ENCODE measurements at regions of chr6 and their contacts with region 1.

Region 1: GRCh38 chr6:13454286-13455221 is 32.8 kb downstream of the GFOD1 start:
- DNase-seq: peak; percentile 31 to 92 (median 70)
- ATAC-seq: peak; percentile 80
- H3K4me3 ChIP-seq: peak overlapping the region; percentile 10 to 26
- H3K4me3 Mint-ChIP-seq: peak overlapping the region; percentile 62
- H3K27ac ChIP-seq: peak overlapping the region; percentile 18 to 77
- H3K27ac Mint-ChIP-seq: peak overlapping the region; percentile 90
- H3K4me1 ChIP-seq: peaks cover 31% of the 10 kb centered on the region
- H3K4me1 Mint-ChIP-seq: peaks cover 36% of the 10 kb centered on the region
- H3K27me3 ChIP-seq: no peaks in the 10 kb centered on the region
- H3K27me3 Mint-ChIP-seq: no peaks in the 10 kb centered on the region
- CTCF ChIP-seq: peak; percentile 25

Region 2: DNA sequence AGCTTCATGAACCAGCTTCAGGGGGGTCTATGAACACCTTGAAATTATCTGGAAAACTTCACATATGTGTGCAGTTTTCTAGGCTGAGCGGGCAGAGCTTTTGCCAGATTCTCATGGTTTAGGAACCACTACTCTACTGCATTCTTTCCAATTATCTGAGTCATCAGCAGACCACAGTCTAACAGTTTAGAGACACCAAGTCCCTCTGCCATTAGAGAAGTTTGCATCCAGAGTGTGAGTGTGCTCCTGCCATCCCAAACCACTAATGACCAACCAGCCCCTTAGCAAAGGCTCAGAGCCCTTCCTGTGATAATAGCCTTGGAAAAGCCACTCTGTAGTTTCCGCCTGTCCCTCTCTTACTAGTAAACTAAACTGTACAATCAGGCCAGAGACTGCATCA is 641.2 kb before region 1 on chr6:
- CTCF ChIA-PET with region 1: no interaction called
- POLR2A ChIA-PET with region 1: no interaction called
- intact Hi-C with region 1: no loop called
- DNase-seq: no peak
- ATAC-seq: no peak
- H3K4me3 ChIP-seq: no peak overlapping the region
- H3K4me3 Mint-ChIP-seq: no peak overlapping the region
- H3K27ac ChIP-seq: no peak overlapping the region
- H3K27ac Mint-ChIP-seq: no peak overlapping the region
- H3K4me1 ChIP-seq: no peaks in the 10 kb centered on the region
- H3K4me1 Mint-ChIP-seq: no peaks in the 10 kb centered on the region
- H3K27me3 ChIP-seq: no peaks in the 10 kb centered on the region
- H3K27me3 Mint-ChIP-seq: peaks cover 4% of the 10 kb centered on the region
- CTCF ChIP-seq: no peak

Region 3: DNA sequence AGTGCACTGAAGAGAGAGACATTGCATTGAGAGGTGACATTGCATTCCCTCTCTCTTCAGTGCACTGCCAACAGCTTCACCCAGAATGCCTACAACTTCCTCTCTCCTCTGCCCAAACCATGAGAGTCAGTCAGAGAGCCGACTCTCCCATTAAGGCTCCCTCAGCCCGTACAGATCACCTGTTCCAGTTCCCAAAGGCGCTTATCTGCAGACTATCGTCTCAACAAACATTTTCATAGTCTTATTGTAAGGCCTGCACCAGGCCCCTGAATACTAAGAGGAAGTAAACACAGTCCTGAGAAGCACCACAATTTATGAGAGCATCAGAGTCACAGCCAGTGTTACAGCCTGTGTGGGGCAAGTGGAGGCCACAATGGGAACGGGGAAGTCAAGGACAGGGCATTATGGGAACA is 20.8 kb before region 1 on chr6:
- CTCF ChIA-PET with region 1: interaction called, 3 read pairs
- POLR2A ChIA-PET with region 1: interaction called, 6 read pairs
- intact Hi-C with region 1: loop called in 1 of 2 experiments (anchors 1 kb)
- DNase-seq: no peak
- ATAC-seq: no peak
- H3K4me3 ChIP-seq: no peak overlapping the region
- H3K4me3 Mint-ChIP-seq: no peak overlapping the region
- H3K27ac ChIP-seq: peak overlapping the region in 1 of 2 experiments; percentile 56
- H3K27ac Mint-ChIP-seq: peak overlapping the region; percentile 68
- H3K4me1 ChIP-seq: peaks cover 30% of the 10 kb centered on the region
- H3K4me1 Mint-ChIP-seq: peaks cover 67% of the 10 kb centered on the region
- H3K27me3 ChIP-seq: no peaks in the 10 kb centered on the region
- H3K27me3 Mint-ChIP-seq: no peaks in the 10 kb centered on the region
- CTCF ChIP-seq: no peak

Region 4: GRCh38 chr6:13526727-13527670 is 72.4 kb after region 1 on chr6:
- CTCF ChIA-PET with region 1: interaction called, 5 read pairs
- POLR2A ChIA-PET with region 1: interaction called, 3 read pairs
- intact Hi-C with region 1: loop called in 1 of 2 experiments (anchors 1 kb)
- DNase-seq: peak in 8 of 9 experiments; percentile 19 to 77 (median 50)
- ATAC-seq: peak; percentile 94
- H3K4me3 ChIP-seq: no peak overlapping the region
- H3K4me3 Mint-ChIP-seq: no peak overlapping the region
- H3K27ac ChIP-seq: no peak overlapping the region
- H3K27ac Mint-ChIP-seq: peak overlapping the region; percentile 25
- H3K4me1 ChIP-seq: peaks cover 16% of the 10 kb centered on the region
- H3K4me1 Mint-ChIP-seq: peaks cover 20% of the 10 kb centered on the region
- H3K27me3 ChIP-seq: no peaks in the 10 kb centered on the region
- H3K27me3 Mint-ChIP-seq: no peaks in the 10 kb centered on the region
- CTCF ChIP-seq: no peak

Region 5: GRCh38 chr6:13538084-13538483 is 83.5 kb after region 1 on chr6:
- CTCF ChIA-PET with region 1: interaction called, 38 read pairs
- POLR2A ChIA-PET with region 1: interaction called, 4 read pairs
- intact Hi-C with region 1: loop called (anchors 1 to 5 kb)
- DNase-seq: peak in 2 of 9 experiments; percentile 52 to 66
- ATAC-seq: peak; percentile 36
- H3K4me3 ChIP-seq: no peak overlapping the region
- H3K4me3 Mint-ChIP-seq: no peak overlapping the region
- H3K27ac ChIP-seq: no peak overlapping the region
- H3K27ac Mint-ChIP-seq: no peak overlapping the region
- H3K4me1 ChIP-seq: no peaks in the 10 kb centered on the region
- H3K4me1 Mint-ChIP-seq: no peaks in the 10 kb centered on the region
- H3K27me3 ChIP-seq: no peaks in the 10 kb centered on the region
- H3K27me3 Mint-ChIP-seq: no peaks in the 10 kb centered on the region
- CTCF ChIP-seq: peak; percentile 44

Region 6: GRCh38 chr6:13767121-13767808 is 312.7 kb after region 1 on chr6:
- CTCF ChIA-PET with region 1: interaction called, 3 read pairs
- POLR2A ChIA-PET with region 1: no interaction called
- intact Hi-C with region 1: loop called in 1 of 2 experiments (anchors 1 kb)
- DNase-seq: peak; percentile 11 to 77 (median 53)
- ATAC-seq: peak; percentile 83
- H3K4me3 ChIP-seq: peak overlapping the region; percentile 16 to 21
- H3K4me3 Mint-ChIP-seq: peak overlapping the region; percentile 73
- H3K27ac ChIP-seq: no peak overlapping the region
- H3K27ac Mint-ChIP-seq: no peak overlapping the region
- H3K4me1 ChIP-seq: peaks cover 18% of the 10 kb centered on the region
- H3K4me1 Mint-ChIP-seq: peaks cover 33% of the 10 kb centered on the region
- H3K27me3 ChIP-seq: no peaks in the 10 kb centered on the region
- H3K27me3 Mint-ChIP-seq: no peaks in the 10 kb centered on the region
- CTCF ChIP-seq: peak; percentile 10